Activated CD4-positive, alpha-beta memory T cell treated with anti-CD3 and anti-CD28 coated beads, Interleukin-2, amount 10 ng/mL, durations not matched to agents 7 days and 5 days (primary cell): ENCODE measurements at regions of chr1 and their contacts with region 1.

Region 1: GRCh38 chr1:100351095-100351891 is 1.0 kb upstream of the CDC14A start:
- DNase-seq: peak; percentile 90
- H3K4me3 Mint-ChIP-seq: peak overlapping the region; percentile 90
- H3K27ac Mint-ChIP-seq: peak overlapping the region; percentile 96
- H3K4me1 Mint-ChIP-seq: peaks cover 29% of the 10 kb centered on the region
- H3K27me3 Mint-ChIP-seq: no peaks in the 10 kb centered on the region

Region 2: GRCh38 chr1:100028765-100029164 is 322.5 kb before region 1 on chr1:
- CTCF ChIA-PET with region 1: no interaction called
- POLR2A ChIA-PET with region 1: interaction called, 10 read pairs
- DNase-seq: peak; percentile 28
- H3K4me3 Mint-ChIP-seq: no peak overlapping the region
- H3K27ac Mint-ChIP-seq: peak overlapping the region; percentile 71
- H3K4me1 Mint-ChIP-seq: peaks cover 16% of the 10 kb centered on the region
- H3K27me3 Mint-ChIP-seq: no peaks in the 10 kb centered on the region

Region 3: DNA sequence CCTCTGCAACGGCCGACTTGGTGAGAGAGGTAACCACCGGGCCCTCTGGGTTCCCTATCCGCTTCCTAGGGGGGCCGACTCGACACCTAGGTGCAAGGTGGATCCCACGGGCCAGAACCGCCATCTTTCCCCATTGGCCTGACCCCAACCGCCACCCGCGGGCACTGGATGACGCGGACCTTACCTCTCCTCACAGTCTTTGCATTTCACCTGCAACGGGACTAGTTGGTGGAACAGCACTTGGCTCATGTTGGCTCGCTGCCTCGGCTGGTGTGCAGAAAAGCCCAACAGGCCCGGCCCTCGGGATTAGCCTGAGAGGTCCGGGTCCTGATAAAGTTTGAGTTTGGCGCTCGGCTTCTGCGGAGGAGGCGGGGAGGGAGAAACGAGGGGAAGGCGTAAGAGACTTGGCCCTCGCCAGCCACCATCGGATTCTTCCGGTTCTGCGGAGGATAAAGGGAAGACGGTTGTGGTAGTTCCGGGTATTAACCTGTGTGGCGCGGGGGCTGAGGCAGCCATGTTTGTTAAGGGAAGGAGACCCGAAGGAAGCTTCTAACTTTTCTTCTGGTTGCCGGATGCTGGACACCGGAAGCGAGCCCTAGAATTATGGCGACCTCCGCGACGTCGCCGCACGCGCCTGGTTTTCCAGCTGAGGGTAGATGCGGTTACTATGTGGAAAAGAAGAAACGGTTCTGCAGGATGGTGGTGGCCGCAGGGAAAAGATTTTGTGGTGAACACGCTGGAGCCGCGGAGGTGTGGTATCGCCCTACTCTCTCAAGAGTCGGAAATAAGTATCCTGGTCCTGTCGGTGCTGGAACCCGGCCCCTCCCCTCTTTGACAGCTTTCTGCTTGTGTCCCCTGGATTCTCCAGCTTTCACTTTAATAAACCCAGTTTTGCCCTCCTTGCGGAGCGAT is 218.5 kb before region 1 on chr1 and contains the starts of genes SASS6 and TRMT13:
- CTCF ChIA-PET with region 1: no interaction called
- POLR2A ChIA-PET with region 1: interaction called, 10 read pairs
- DNase-seq: peak; percentile 97
- H3K4me3 Mint-ChIP-seq: peak within 1 kb of the TSS; percentile 96
- H3K27ac Mint-ChIP-seq: peak within 1 kb of the TSS; percentile 90
- H3K4me1 Mint-ChIP-seq: peaks cover 50% of the 10 kb centered on the region
- H3K27me3 Mint-ChIP-seq: no peaks in the 10 kb centered on the region
- total RNA-seq, gene SASS6: 13.2 to 13.3 TPM
- total RNA-seq, gene TRMT13: 13.9 to 15.4 TPM

Region 4: GRCh38 chr1:100387209-100387608 is 35.9 kb after region 1 on chr1:
- CTCF ChIA-PET with region 1: interaction called, 12 read pairs
- POLR2A ChIA-PET with region 1: interaction called, 52 read pairs
- DNase-seq: no peak
- H3K4me3 Mint-ChIP-seq: peak overlapping the region; percentile 58
- H3K27ac Mint-ChIP-seq: peak overlapping the region; percentile 72
- H3K4me1 Mint-ChIP-seq: peaks cover 64% of the 10 kb centered on the region
- H3K27me3 Mint-ChIP-seq: no peaks in the 10 kb centered on the region

Region 5: GRCh38 chr1:100414693-100415497 is 63.6 kb after region 1 on chr1:
- CTCF ChIA-PET with region 1: interaction called, 3 read pairs
- POLR2A ChIA-PET with region 1: interaction called, 32 read pairs
- DNase-seq: no peak
- H3K4me3 Mint-ChIP-seq: peak overlapping the region; percentile 24
- H3K27ac Mint-ChIP-seq: peak overlapping the region; percentile 62
- H3K4me1 Mint-ChIP-seq: peaks cover 62% of the 10 kb centered on the region
- H3K27me3 Mint-ChIP-seq: no peaks in the 10 kb centered on the region

Region 6: GRCh38 chr1:100433563-100433962 is 82.3 kb after region 1 on chr1:
- CTCF ChIA-PET with region 1: interaction called, 3 read pairs
- POLR2A ChIA-PET with region 1: interaction called, 96 read pairs
- DNase-seq: no peak
- H3K4me3 Mint-ChIP-seq: no peak overlapping the region
- H3K27ac Mint-ChIP-seq: peak overlapping the region; percentile 4
- H3K4me1 Mint-ChIP-seq: peaks cover 70% of the 10 kb centered on the region
- H3K27me3 Mint-ChIP-seq: no peaks in the 10 kb centered on the region

Region 7: GRCh38 chr1:100452641-100453040 is 101.3 kb after region 1 on chr1:
- CTCF ChIA-PET with region 1: interaction called, 114 read pairs
- POLR2A ChIA-PET with region 1: interaction called, 69 read pairs
- DNase-seq: no peak
- H3K4me3 Mint-ChIP-seq: no peak overlapping the region
- H3K27ac Mint-ChIP-seq: peak overlapping the region; percentile 85
- H3K4me1 Mint-ChIP-seq: peaks cover 86% of the 10 kb centered on the region
- H3K27me3 Mint-ChIP-seq: no peaks in the 10 kb centered on the region